Activated CD4-positive, alpha-beta memory T cell treated with anti-CD3 and anti-CD28 coated beads for 36 hours (primary cell): ENCODE measurements at regions of chr9 and their contacts with region 1.

Region 1: GRCh38 chr9:123349691-123350480 is 6.1 kb upstream of the CRB2 start:
- DNase-seq: peak; percentile 72
- H3K4me3 Mint-ChIP-seq: no peak overlapping the region
- H3K27ac Mint-ChIP-seq: no peak overlapping the region
- H3K4me1 Mint-ChIP-seq: no peaks in the 10 kb centered on the region
- H3K27me3 Mint-ChIP-seq: peaks cover 16% of the 10 kb centered on the region

Region 2: GRCh38 chr9:122464633-122465567 is 885.0 kb before region 1 on chr9:
- CTCF ChIA-PET with region 1: no interaction called
- POLR2A ChIA-PET with region 1: no interaction called
- intact Hi-C with region 1: loop called (anchors 5 kb)
- DNase-seq: peak; percentile 75
- H3K4me3 Mint-ChIP-seq: peak overlapping the region; percentile 73
- H3K27ac Mint-ChIP-seq: peak overlapping the region; percentile 39
- H3K4me1 Mint-ChIP-seq: peaks cover 10% of the 10 kb centered on the region
- H3K27me3 Mint-ChIP-seq: peaks cover 25% of the 10 kb centered on the region

Region 3: GRCh38 chr9:123074628-123075027 is 275.3 kb before region 1 on chr9:
- CTCF ChIA-PET with region 1: interaction called, 73 read pairs
- POLR2A ChIA-PET with region 1: no interaction called
- intact Hi-C with region 1: no loop called
- DNase-seq: no peak
- H3K4me3 Mint-ChIP-seq: no peak overlapping the region
- H3K27ac Mint-ChIP-seq: no peak overlapping the region
- H3K4me1 Mint-ChIP-seq: peaks cover 10% of the 10 kb centered on the region
- H3K27me3 Mint-ChIP-seq: no peaks in the 10 kb centered on the region

Region 4: DNA sequence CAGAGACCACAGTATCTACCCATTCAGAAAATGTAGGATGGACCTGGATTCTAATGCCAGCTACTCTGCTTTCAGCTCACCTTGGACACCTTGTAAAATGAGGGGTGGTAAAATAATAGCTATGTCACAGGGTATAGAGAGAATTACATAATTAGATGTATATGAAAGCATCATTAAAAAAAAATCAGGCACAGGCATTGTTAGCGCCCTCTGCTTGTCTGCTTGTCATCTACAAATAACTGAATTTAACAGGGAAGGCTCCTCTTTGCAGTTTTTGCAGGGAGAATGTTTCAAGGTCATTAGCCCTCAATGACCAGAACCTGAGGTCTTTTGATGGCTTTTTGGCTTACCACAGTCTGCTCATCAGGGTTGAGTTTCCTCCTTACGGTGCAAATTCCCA is 258.4 kb before region 1 on chr9:
- CTCF ChIA-PET with region 1: interaction called, 36 read pairs
- POLR2A ChIA-PET with region 1: no interaction called
- intact Hi-C with region 1: no loop called
- DNase-seq: no peak
- H3K4me3 Mint-ChIP-seq: no peak overlapping the region
- H3K27ac Mint-ChIP-seq: no peak overlapping the region
- H3K4me1 Mint-ChIP-seq: no peaks in the 10 kb centered on the region
- H3K27me3 Mint-ChIP-seq: no peaks in the 10 kb centered on the region

Region 5: GRCh38 chr9:123107639-123108285 is 242.1 kb before region 1 on chr9:
- CTCF ChIA-PET with region 1: interaction called, 29 read pairs
- POLR2A ChIA-PET with region 1: no interaction called
- intact Hi-C with region 1: no loop called
- DNase-seq: no peak
- H3K4me3 Mint-ChIP-seq: no peak overlapping the region
- H3K27ac Mint-ChIP-seq: no peak overlapping the region
- H3K4me1 Mint-ChIP-seq: peaks cover 11% of the 10 kb centered on the region
- H3K27me3 Mint-ChIP-seq: no peaks in the 10 kb centered on the region

Region 6: GRCh38 chr9:123389070-123389469 is 39.2 kb after region 1 on chr9:
- CTCF ChIA-PET with region 1: interaction called, 93 read pairs
- POLR2A ChIA-PET with region 1: interaction called, 3 read pairs
- intact Hi-C with region 1: loop called (anchors 1 kb)
- DNase-seq: no peak
- H3K4me3 Mint-ChIP-seq: no peak overlapping the region
- H3K27ac Mint-ChIP-seq: no peak overlapping the region
- H3K4me1 Mint-ChIP-seq: no peaks in the 10 kb centered on the region
- H3K27me3 Mint-ChIP-seq: no peaks in the 10 kb centered on the region